H1 (cell line): ENCODE measurements at regions of chr1 and their contacts with region 1.

Region 1: GRCh38 chr1:44609412-44609767 is 64.9 kb downstream of the TMEM53 start:
- DNase-seq: peak; percentile 67 to 93
- H3K4me3 ChIP-seq: no peak overlapping the region
- H3K27ac ChIP-seq: no peak overlapping the region
- H3K4me1 ChIP-seq: peaks cover 2 to 18% (median 11%) of the 10 kb centered on the region in 4 experiments; a peak in 6 of 7 replicates
- H3K27me3 ChIP-seq: no peaks in the 10 kb centered on the region
- CTCF ChIP-seq: peak; percentile 78 to 86 (median 84)
- EP300 ChIP-seq: no peak
- POLR2A ChIP-seq: no peak
- RAD21 ChIP-seq: peak; percentile 71 to 83

Region 2: DNA sequence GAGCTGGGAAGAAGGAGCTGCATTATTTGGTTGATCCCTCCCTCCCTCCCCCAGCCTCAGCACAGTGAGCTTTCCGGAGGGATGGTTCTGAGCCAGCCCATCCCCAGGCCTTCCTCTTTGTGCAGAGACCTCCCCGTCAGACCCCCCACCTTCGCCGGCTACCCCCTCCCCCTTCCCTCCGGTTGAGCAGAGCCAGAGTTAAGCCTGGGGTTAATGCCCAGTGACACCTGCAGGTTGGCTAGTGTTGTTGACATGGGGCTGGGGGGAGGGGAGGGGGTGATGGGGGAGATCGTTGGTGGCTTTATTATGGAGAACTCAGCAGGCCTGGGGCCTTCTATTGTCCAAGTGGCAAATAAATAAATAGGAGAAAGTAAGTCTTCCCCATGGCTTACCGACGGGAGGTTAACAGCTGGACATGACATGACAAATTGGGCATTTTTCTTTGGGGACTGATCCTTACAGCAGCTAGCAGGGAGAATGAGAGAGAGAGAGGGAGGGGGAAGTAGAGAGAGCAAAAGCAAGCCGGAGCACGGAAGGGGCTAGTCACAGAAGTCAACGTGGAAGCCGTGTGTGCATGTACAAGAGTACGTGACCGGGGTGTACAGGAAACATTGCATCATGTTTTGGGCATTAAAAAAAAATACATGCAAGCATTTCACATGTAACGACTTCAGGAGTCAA is 66.2 kb before region 1 on chr1:
- CTCF ChIA-PET with region 1: interaction called, 12 read pairs
- POLR2A ChIA-PET with region 1: interaction called, 3 read pairs
- DNase-seq: peak; percentile 75 to 98
- H3K4me3 ChIP-seq: peak overlapping the region in 3 of 4 experiments; percentile 16 to 56 (median 26); a peak in 5 of 8 replicates
- H3K27ac ChIP-seq: peak overlapping the region; percentile 91
- H3K4me1 ChIP-seq: peaks cover 21 to 51% (median 39%) of the 10 kb centered on the region in 4 experiments
- H3K27me3 ChIP-seq: peaks cover 0 to 10% (median 2%) of the 10 kb centered on the region in 4 experiments; a peak in 2 of 7 replicates
- CTCF ChIP-seq: peak in 2 of 3 experiments; percentile 17 to 49; a peak in 2 of 4 replicates
- EP300 ChIP-seq: peak in 1 of 2 experiments; percentile 90; a peak in 1 of 3 replicates
- POLR2A ChIP-seq: peak in 1 of 2 experiments; percentile 47; a peak in 1 of 3 replicates
- RAD21 ChIP-seq: peak; percentile 61 to 66

Region 3: GRCh38 chr1:44594871-44595746 is 14.3 kb before region 1 on chr1:
- CTCF ChIA-PET with region 1: interaction called, 69 read pairs
- POLR2A ChIA-PET with region 1: no interaction called
- DNase-seq: peak; percentile 39 to 98
- H3K4me3 ChIP-seq: no peak overlapping the region
- H3K27ac ChIP-seq: no peak overlapping the region
- H3K4me1 ChIP-seq: peaks cover 12 to 23% (median 19%) of the 10 kb centered on the region in 4 experiments
- H3K27me3 ChIP-seq: no peaks in the 10 kb centered on the region
- CTCF ChIP-seq: peak; percentile 94 to 98 (median 96)
- EP300 ChIP-seq: no peak
- POLR2A ChIP-seq: no peak
- RAD21 ChIP-seq: peak; percentile 99

Region 4: DNA sequence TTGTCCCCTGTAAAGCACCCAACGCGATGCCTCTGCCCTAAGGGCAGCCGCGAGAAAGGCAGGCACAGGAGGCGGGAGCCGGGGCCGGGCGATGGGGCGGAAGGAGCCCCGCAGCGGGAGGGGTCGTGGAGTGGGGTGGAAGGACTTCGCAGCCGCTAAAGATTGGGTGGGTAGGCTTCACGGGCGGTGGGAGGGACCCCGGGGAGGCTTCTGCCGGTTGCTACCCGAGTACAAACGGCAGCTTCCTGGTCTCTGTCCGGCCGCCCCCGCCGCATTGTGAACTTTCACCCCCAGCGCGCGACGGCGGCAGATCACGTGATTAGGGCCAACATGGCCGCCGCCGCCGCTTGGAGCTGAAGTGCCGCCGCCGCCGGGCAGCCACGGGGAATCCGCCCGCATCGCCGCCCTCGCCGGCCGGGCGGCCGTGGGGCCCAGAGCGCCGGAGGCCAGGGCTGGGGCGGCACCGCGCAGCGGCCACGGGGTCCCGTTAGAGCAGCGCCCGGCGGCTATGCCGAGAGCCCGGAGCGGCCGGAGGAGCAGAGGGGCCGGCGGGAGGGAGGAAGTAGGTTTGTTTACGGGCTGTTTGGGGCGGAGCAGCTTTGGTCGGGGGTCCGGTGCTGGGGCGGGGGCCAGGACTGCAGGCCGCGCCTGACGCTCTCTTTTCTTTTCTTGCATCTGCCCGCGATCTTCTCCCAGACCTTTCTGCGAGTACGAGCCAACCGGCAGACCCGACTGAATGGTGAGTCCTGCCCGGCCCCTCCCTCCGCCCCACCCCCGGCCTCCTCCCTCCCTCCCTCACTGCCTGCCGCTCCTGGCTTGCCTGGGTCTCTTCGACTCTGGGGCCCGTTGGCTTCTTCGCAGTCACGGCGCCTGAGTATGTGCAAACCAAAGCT is 22.5 kb after region 1 on chr1:
- CTCF ChIA-PET with region 1: interaction called, 127 read pairs
- POLR2A ChIA-PET with region 1: interaction called, 633 read pairs
- DNase-seq: peak in 1 of 2 experiments; percentile 91
- H3K4me3 ChIP-seq: peak overlapping the region; percentile 73 to 81 (median 78)
- H3K27ac ChIP-seq: peak overlapping the region; percentile 96
- H3K4me1 ChIP-seq: peaks cover 0 to 11% (median 4%) of the 10 kb centered on the region in 4 experiments; a peak in 6 of 7 replicates
- H3K27me3 ChIP-seq: no peaks in the 10 kb centered on the region
- CTCF ChIP-seq: no peak
- EP300 ChIP-seq: peak in 1 of 2 experiments; percentile 36; a peak in 1 of 3 replicates
- POLR2A ChIP-seq: peak; percentile 61 to 97
- RAD21 ChIP-seq: no peak

Region 5: GRCh38 chr1:44645476-44646244 is 36.3 kb after region 1 on chr1:
- CTCF ChIA-PET with region 1: interaction called, 129 read pairs
- POLR2A ChIA-PET with region 1: interaction called, 633 read pairs
- DNase-seq: no peak
- H3K4me3 ChIP-seq: no peak overlapping the region
- H3K27ac ChIP-seq: no peak overlapping the region
- H3K4me1 ChIP-seq: peaks cover 0 to 10% (median 8%) of the 10 kb centered on the region in 4 experiments; a peak in 4 of 7 replicates
- H3K27me3 ChIP-seq: no peaks in the 10 kb centered on the region
- CTCF ChIP-seq: no peak
- EP300 ChIP-seq: no peak
- POLR2A ChIP-seq: no peak
- RAD21 ChIP-seq: no peak

Region 6: DNA sequence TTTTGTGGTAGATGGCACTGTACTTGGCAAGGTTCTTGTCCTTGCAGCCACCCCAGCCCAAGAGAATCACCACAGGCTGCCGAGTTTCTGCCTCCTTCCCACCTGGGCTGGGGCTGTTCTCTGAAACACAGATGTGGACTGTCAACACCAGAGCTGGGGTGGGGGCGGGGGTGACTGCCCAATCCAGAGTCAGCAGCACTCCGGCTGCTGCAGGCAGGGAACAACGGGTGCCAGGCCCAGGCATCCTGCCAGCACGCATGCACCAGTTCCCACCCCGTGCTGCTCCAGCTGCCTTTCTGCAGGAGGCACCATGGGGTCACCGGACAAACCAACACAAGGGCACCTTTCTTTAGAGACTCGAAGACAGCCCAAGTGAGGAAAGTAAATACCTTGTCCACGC is 50.8 kb after region 1 on chr1:
- CTCF ChIA-PET with region 1: interaction called, 20 read pairs
- POLR2A ChIA-PET with region 1: no interaction called
- DNase-seq: no peak
- H3K4me3 ChIP-seq: no peak overlapping the region
- H3K27ac ChIP-seq: no peak overlapping the region
- H3K4me1 ChIP-seq: no peaks in the 10 kb centered on the region; a peak in 2 of 7 replicates
- H3K27me3 ChIP-seq: no peaks in the 10 kb centered on the region
- CTCF ChIP-seq: no peak
- EP300 ChIP-seq: no peak
- POLR2A ChIP-seq: no peak
- RAD21 ChIP-seq: no peak

Region 7: DNA sequence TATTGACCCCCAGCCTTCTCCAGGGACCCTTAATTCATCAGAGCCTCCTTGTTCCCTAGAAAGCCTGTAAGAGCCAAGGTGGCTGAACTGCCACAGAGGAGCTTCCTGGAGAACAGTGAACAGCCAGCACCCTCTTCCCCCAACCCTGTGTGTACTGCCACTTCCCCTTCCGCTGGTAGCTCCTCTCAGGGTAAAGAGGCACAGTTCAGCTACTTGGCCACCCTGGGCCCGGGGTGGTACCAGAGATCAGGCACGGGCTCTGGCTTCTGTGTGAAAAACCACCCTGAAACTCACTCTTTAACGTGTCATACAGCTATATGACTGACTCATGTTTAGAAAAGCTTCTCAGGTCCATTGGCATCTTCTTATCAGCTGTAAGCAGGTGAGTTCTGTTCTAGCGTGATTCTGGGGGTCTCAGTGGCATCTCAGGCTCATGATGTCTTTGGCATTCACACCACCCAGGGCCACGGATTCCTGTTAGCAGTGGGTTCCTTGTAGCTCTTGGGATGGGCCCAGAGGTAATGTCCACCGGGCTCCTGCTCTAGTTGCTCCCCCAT is 87.5 kb after region 1 on chr1:
- CTCF ChIA-PET with region 1: no interaction called
- POLR2A ChIA-PET with region 1: no interaction called
- DNase-seq: no peak
- H3K4me3 ChIP-seq: no peak overlapping the region
- H3K27ac ChIP-seq: no peak overlapping the region
- H3K4me1 ChIP-seq: no peaks in the 10 kb centered on the region
- H3K27me3 ChIP-seq: no peaks in the 10 kb centered on the region
- CTCF ChIP-seq: no peak
- EP300 ChIP-seq: no peak
- POLR2A ChIP-seq: no peak
- RAD21 ChIP-seq: no peak

Region 8: DNA sequence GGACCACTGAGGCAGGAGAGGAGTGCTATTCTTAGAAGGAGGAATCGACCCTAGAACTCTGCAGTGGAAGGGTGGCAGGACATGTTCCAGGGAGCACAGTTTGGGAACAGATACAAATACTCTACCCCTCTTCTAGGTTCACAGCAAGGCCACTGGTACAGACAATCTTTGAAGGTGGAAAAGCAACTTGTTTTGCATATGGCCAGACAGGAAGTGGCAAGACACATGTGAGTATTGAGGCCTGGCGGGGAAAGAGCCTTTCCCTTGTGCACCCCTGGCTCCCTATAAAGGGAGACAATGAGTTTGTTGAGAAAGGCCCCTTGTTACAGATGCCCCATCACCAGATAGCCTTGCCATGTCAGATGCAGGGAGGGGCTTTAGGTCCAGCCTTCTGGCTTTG is 148.0 kb after region 1 on chr1:
- CTCF ChIA-PET with region 1: no interaction called
- POLR2A ChIA-PET with region 1: no interaction called
- DNase-seq: no peak
- H3K4me3 ChIP-seq: no peak overlapping the region
- H3K27ac ChIP-seq: no peak overlapping the region
- H3K4me1 ChIP-seq: no peaks in the 10 kb centered on the region
- H3K27me3 ChIP-seq: no peaks in the 10 kb centered on the region
- CTCF ChIP-seq: no peak
- EP300 ChIP-seq: no peak
- POLR2A ChIP-seq: no peak
- RAD21 ChIP-seq: no peak

Region 9: GRCh38 chr1:44780583-44781121 is 171.3 kb after region 1 on chr1:
- CTCF ChIA-PET with region 1: no interaction called
- POLR2A ChIA-PET with region 1: no interaction called
- DNase-seq: no peak
- H3K4me3 ChIP-seq: no peak overlapping the region
- H3K27ac ChIP-seq: no peak overlapping the region
- H3K4me1 ChIP-seq: peaks cover 0 to 18% (median 9%) of the 10 kb centered on the region in 4 experiments; a peak in 6 of 7 replicates
- H3K27me3 ChIP-seq: peaks cover 0 to 3% (median 0%) of the 10 kb centered on the region in 4 experiments; a peak in 3 of 7 replicates
- CTCF ChIP-seq: no peak
- EP300 ChIP-seq: no peak
- POLR2A ChIP-seq: peak in 1 of 2 experiments; percentile 65; a peak in 2 of 3 replicates
- RAD21 ChIP-seq: no peak